CD8-positive, alpha-beta memory T cell (primary cell): ENCODE measurements at regions of chr19 and their contacts with region 1.

Region 1: GRCh38 chr19:11374433-11375142 is at the start of gene SWSAP1:
- DNase-seq: peak; percentile 94 to 99 (median 98)
- H3K4me3 ChIP-seq: peak within 1 kb of the TSS; percentile 57
- H3K4me3 Mint-ChIP-seq: peak within 1 kb of the TSS in 1 of 7 donors; percentile 37
- H3K27ac ChIP-seq: peak within 1 kb of the TSS; percentile 88
- H3K27ac Mint-ChIP-seq: peak within 1 kb of the TSS in 1 of 8 donors; percentile 70
- H3K4me1 ChIP-seq: peaks cover 33% of the 10 kb centered on the region
- H3K4me1 Mint-ChIP-seq: peaks cover 13 to 21% (median 15%) of the 10 kb centered on the region in 3 donors
- H3K27me3 ChIP-seq: no peaks in the 10 kb centered on the region
- H3K27me3 Mint-ChIP-seq: no peaks in the 10 kb centered on the region
- total RNA-seq, gene SWSAP1: 2.1 to 2.2 TPM

Region 2: GRCh38 chr19:11346092-11346940 is 28.3 kb before region 1 on chr19 and contains the starts of genes CCDC159 and TMEM205:
- CTCF ChIA-PET with region 1: interaction called, 6 read pairs
- POLR2A ChIA-PET with region 1: interaction called, 24 read pairs
- DNase-seq: peak; percentile 98 to 99 (median 98)
- H3K4me3 ChIP-seq: peak within 1 kb of the TSS; percentile 85
- H3K4me3 Mint-ChIP-seq: peak within 1 kb of the TSS; percentile 86 to 99 (median 95)
- H3K27ac ChIP-seq: peak within 1 kb of the TSS; percentile 72
- H3K27ac Mint-ChIP-seq: peak within 1 kb of the TSS; percentile 69 to 97 (median 93)
- H3K4me1 ChIP-seq: peaks cover 20% of the 10 kb centered on the region
- H3K4me1 Mint-ChIP-seq: peaks cover 23 to 31% (median 30%) of the 10 kb centered on the region in 3 donors
- H3K27me3 ChIP-seq: no peaks in the 10 kb centered on the region
- H3K27me3 Mint-ChIP-seq: peaks cover 0 to 2% of the 10 kb centered on the region in 2 donors
- total RNA-seq, gene CCDC159: 14.2 to 14.6 TPM
- total RNA-seq, gene TMEM205: 24.8 to 30.5 TPM

Region 3: DNA sequence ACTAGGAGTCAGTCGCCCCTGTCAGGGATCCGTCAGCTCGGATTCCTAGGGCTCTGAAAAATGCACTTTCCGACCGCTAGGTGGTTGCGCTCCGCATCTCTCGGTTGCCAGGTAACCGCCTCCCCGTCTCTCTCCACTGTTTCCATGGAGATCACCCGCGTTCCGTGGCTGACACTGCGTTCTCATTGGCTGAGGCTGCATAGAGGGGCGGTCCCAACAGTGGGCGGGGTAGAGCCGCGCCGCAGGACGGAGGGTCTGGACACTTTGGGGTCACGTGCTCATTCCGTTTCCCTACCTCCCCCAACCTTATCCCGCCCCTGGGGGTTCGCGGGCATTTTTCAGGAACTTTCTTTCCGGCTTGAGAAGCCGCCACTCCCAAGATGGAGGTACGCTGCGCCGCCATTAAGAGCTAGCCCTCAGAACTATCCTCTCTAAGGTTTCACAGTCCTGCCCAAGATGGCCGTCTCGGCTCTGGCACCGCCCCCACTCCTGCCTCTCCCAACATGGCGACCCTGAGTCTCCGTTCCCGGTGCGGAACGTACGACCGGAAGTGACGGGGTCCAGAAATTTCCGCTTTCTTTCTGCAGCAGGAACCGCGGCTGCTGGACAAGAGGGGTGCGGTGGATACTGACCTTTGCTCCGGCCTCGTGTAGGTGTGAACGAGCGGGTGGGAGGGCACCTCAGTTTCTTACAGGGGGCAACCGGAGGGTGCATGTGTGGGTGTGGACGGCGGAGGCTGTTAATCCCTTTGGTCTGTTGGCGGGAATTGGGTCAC is 60.7 kb after region 1 on chr19 and contains the starts of genes ODAD3 and PRKCSH:
- CTCF ChIA-PET with region 1: interaction called, 10 read pairs
- POLR2A ChIA-PET with region 1: interaction called, 17 read pairs
- DNase-seq: peak; percentile 93 to 99 (median 97)
- H3K4me3 ChIP-seq: peak within 1 kb of the TSS; percentile 95
- H3K4me3 Mint-ChIP-seq: peak within 1 kb of the TSS; percentile 92 to 100 (median 99)
- H3K27ac ChIP-seq: peak within 1 kb of the TSS; percentile 83
- H3K27ac Mint-ChIP-seq: peak within 1 kb of the TSS; percentile 91 to 99 (median 98)
- H3K4me1 ChIP-seq: peaks cover 19% of the 10 kb centered on the region
- H3K4me1 Mint-ChIP-seq: peaks cover 20 to 32% (median 26%) of the 10 kb centered on the region in 3 donors
- H3K27me3 ChIP-seq: no peaks in the 10 kb centered on the region
- H3K27me3 Mint-ChIP-seq: peaks cover 5 to 6% of the 10 kb centered on the region in 2 donors
- total RNA-seq, gene ODAD3: 0.11 to 0.24 TPM
- total RNA-seq, gene PRKCSH: 262 to 272 TPM